CD4-positive, alpha-beta memory T cell (primary cell): ENCODE measurements at regions of chr12 and their contacts with region 1.

Region 1: DNA sequence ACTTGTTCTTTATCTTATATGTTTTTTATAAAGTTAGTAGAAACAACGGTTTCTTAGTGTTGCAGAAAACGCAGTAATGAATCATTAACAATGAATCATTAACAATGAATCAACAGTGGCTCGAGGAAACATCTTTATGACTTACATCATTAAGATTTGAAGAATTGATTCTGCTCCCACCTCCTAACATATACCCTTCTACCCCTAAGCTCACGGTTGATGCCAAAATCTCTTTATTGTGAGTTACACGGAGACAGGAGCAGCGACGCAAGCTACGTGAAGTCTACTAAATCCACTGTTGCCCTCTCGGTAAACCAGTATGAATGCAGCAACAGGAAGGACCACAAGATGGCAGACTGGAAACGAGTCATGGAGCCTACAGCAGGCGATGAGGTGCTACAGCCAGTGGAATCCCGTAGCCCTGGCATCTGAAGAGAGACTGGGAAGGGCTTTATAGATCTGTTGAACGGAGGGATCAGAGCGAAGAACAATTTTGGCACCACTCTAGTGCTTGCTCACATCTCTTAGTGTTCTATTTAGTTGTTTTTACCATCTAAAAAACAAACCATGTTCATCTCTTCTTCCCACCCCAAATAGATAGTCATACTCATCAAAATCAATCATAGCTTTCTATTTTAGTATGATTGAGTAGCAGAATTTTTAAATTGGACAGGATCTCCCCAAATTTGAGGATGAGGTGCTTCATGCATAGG is 332.7 kb downstream of the DUSP6 start:
- DNase-seq: peak; percentile 63 to 72 (median 68)
- H3K4me3 ChIP-seq: peak overlapping the region in 1 of 2 donors; percentile 29
- H3K4me3 Mint-ChIP-seq: no peak overlapping the region
- H3K27ac ChIP-seq: no peak overlapping the region
- H3K27ac Mint-ChIP-seq: no peak overlapping the region
- H3K4me1 ChIP-seq: peaks cover 10% of the 10 kb centered on the region
- H3K4me1 Mint-ChIP-seq: peaks cover 0 to 1% (median 0%) of the 10 kb centered on the region in 4 donors
- H3K27me3 ChIP-seq: no peaks in the 10 kb centered on the region
- H3K27me3 Mint-ChIP-seq: peaks cover 0 to 2% of the 10 kb centered on the region in 2 donors

Region 2: GRCh38 chr12:88793096-88793495 is 226.5 kb before region 1 on chr12:
- CTCF ChIA-PET with region 1: no interaction called
- POLR2A ChIA-PET with region 1: no interaction called
- intact Hi-C with region 1: no loop called
- DNase-seq: no peak
- H3K4me3 ChIP-seq: no peak overlapping the region
- H3K4me3 Mint-ChIP-seq: peak overlapping the region in 1 of 8 donors; percentile 28
- H3K27ac ChIP-seq: no peak overlapping the region
- H3K27ac Mint-ChIP-seq: no peak overlapping the region
- H3K4me1 ChIP-seq: no peaks in the 10 kb centered on the region
- H3K4me1 Mint-ChIP-seq: no peaks in the 10 kb centered on the region
- H3K27me3 ChIP-seq: no peaks in the 10 kb centered on the region
- H3K27me3 Mint-ChIP-seq: no peaks in the 10 kb centered on the region

Region 3: DNA sequence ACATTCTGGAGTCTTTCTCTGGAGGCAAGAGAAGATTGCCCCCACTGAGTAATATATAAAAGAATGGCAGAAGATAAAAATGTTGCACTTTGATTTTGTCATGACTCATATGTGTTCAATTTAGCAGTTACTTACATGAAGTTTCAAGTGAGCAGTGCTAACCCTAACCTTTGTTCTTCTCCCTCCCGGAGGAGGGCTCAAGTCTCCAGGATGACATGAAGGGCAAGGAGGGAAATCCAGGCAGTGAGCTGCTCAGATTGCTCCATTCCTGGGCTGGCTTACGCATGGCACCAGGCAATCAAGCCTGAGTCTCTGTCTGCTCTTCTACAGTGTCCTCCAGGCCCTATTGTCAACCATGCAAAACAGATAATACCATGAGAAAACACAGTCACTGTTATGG is 10.4 kb after region 1 on chr12:
- CTCF ChIA-PET with region 1: interaction called, 40 read pairs
- POLR2A ChIA-PET with region 1: no interaction called
- intact Hi-C with region 1: no loop called
- DNase-seq: no peak
- H3K4me3 ChIP-seq: no peak overlapping the region
- H3K4me3 Mint-ChIP-seq: no peak overlapping the region
- H3K27ac ChIP-seq: no peak overlapping the region
- H3K27ac Mint-ChIP-seq: no peak overlapping the region
- H3K4me1 ChIP-seq: no peaks in the 10 kb centered on the region
- H3K4me1 Mint-ChIP-seq: no peaks in the 10 kb centered on the region
- H3K27me3 ChIP-seq: no peaks in the 10 kb centered on the region
- H3K27me3 Mint-ChIP-seq: peaks cover 1 to 2% of the 10 kb centered on the region in 2 donors

Region 4: DNA sequence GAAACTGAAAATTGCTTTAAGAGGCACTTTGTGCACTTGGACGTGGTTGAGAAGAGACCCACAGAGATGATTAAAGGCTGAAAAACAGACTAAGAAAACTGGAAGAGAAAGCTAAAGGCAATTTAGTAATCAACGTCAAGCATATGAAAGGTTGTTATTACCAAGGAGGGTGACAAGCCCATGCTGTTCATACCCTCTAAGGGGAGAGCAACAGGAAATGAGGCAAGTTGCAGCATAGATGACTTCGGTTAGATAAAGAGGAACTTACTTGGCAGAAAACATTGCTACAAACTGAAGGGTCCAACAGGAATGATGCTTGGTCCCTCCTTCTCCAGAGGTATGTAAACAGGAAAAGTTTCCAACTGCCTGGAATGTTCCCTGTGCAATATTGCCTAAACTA is 225.0 kb after region 1 on chr12:
- CTCF ChIA-PET with region 1: interaction called, 5 read pairs
- POLR2A ChIA-PET with region 1: no interaction called
- intact Hi-C with region 1: loop called (anchors 10 kb)
- DNase-seq: peak; percentile 28 to 59 (median 49)
- H3K4me3 ChIP-seq: peak overlapping the region in 1 of 2 donors; percentile 21
- H3K4me3 Mint-ChIP-seq: peak overlapping the region; percentile 6 to 70 (median 50)
- H3K27ac ChIP-seq: no peak overlapping the region
- H3K27ac Mint-ChIP-seq: peak overlapping the region; percentile 13 to 73 (median 57)
- H3K4me1 ChIP-seq: peaks cover 30% of the 10 kb centered on the region
- H3K4me1 Mint-ChIP-seq: peaks cover 31 to 34% (median 33%) of the 10 kb centered on the region in 4 donors
- H3K27me3 ChIP-seq: no peaks in the 10 kb centered on the region
- H3K27me3 Mint-ChIP-seq: no peaks in the 10 kb centered on the region

Region 5: GRCh38 chr12:89470741-89471509 is 451.4 kb after region 1 on chr12:
- CTCF ChIA-PET with region 1: interaction called, 31 read pairs
- POLR2A ChIA-PET with region 1: interaction called, 3 read pairs
- intact Hi-C with region 1: no loop called
- DNase-seq: peak in 4 of 5 donors; percentile 47 to 55 (median 53)
- H3K4me3 ChIP-seq: no peak overlapping the region
- H3K4me3 Mint-ChIP-seq: peak overlapping the region in 2 of 8 donors; percentile 41 to 55
- H3K27ac ChIP-seq: no peak overlapping the region
- H3K27ac Mint-ChIP-seq: peak overlapping the region in 4 of 7 donors; percentile 28 to 84 (median 76)
- H3K4me1 ChIP-seq: peaks cover 52% of the 10 kb centered on the region
- H3K4me1 Mint-ChIP-seq: peaks cover 34 to 60% (median 46%) of the 10 kb centered on the region in 4 donors
- H3K27me3 ChIP-seq: no peaks in the 10 kb centered on the region
- H3K27me3 Mint-ChIP-seq: no peaks in the 10 kb centered on the region

Region 6: DNA sequence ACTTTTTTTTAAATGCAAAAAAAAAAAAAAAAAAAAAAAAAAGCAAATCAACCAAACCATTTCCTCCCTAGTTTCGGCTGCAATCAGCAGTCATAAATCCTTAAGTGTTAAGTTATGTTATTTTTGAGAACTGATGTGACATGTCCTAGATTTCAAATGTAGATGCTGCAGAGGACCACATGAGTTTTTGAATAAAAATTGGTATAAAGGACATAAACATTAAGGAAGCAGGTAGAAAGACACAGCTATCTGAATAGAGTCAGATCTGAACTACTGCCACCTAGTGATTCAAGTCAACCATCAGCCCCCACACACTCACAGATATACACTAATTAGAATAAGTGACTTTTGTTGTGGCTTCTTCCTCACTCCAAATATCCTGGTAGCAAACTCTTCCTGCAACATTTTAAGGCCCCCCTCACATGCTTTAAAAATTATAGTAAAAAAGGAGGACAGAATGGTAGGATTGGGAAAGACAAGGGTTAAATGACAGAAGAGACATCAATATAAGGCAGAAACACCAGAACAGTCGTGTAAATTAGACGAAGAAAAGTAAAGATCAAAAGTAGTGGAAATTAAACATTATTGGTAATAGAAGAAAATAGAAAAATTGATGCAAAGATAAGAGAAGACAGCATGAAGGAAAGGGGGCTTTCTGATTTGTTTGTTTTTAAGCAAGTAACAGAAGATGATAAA is 1083.5 kb after region 1 on chr12:
- CTCF ChIA-PET with region 1: no interaction called
- POLR2A ChIA-PET with region 1: no interaction called
- intact Hi-C with region 1: loop called (anchors 5 kb)
- DNase-seq: peak in 4 of 5 donors; percentile 42 to 54 (median 52)
- H3K4me3 ChIP-seq: no peak overlapping the region
- H3K4me3 Mint-ChIP-seq: peak overlapping the region; percentile 54 to 83 (median 80)
- H3K27ac ChIP-seq: no peak overlapping the region
- H3K27ac Mint-ChIP-seq: peak overlapping the region in 3 of 7 donors; percentile 5 to 83 (median 78)
- H3K4me1 ChIP-seq: peaks cover 14% of the 10 kb centered on the region
- H3K4me1 Mint-ChIP-seq: peaks cover 14 to 24% (median 15%) of the 10 kb centered on the region in 4 donors
- H3K27me3 ChIP-seq: no peaks in the 10 kb centered on the region
- H3K27me3 Mint-ChIP-seq: peaks cover 0 to 3% of the 10 kb centered on the region in 2 donors

Region 7: DNA sequence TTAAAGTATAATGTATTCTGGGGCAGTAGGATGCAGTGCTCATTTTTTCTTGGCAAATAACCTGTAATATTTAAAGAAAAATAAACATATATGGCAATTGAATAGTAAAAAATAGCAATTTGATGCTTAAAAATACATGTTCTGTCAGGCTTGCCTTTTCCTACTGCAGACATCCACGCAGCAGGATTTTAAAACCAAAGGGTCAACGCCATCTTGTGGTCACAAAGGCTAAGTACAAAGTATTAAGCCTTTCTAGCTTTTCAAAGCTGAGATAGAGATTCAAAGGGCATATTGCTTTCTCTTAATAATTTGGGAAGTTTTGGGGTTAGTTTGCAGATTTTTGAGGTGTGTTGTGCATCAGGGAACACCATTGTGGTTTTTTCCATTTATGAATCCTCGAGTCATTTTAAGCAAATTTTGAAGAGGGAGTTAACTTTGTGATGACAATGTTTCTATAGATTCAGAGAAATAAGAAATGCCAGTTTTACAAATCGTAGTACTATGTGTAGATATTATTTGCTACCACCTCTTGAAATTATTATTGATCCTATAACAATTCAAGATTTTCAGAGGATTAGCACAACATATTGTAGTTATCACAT is 1940.1 kb after region 1 on chr12:
- CTCF ChIA-PET with region 1: interaction called, 3 read pairs
- POLR2A ChIA-PET with region 1: no interaction called
- intact Hi-C with region 1: loop called (anchors 5 kb)
- DNase-seq: peak in 4 of 5 donors; percentile 22 to 30 (median 28)
- H3K4me3 ChIP-seq: no peak overlapping the region
- H3K4me3 Mint-ChIP-seq: no peak overlapping the region
- H3K27ac ChIP-seq: no peak overlapping the region
- H3K27ac Mint-ChIP-seq: no peak overlapping the region
- H3K4me1 ChIP-seq: no peaks in the 10 kb centered on the region
- H3K4me1 Mint-ChIP-seq: no peaks in the 10 kb centered on the region
- H3K27me3 ChIP-seq: no peaks in the 10 kb centered on the region
- H3K27me3 Mint-ChIP-seq: no peaks in the 10 kb centered on the region